ENCODE measurements at regions of chr11 and their contacts with region 1.

Region 1: DNA sequence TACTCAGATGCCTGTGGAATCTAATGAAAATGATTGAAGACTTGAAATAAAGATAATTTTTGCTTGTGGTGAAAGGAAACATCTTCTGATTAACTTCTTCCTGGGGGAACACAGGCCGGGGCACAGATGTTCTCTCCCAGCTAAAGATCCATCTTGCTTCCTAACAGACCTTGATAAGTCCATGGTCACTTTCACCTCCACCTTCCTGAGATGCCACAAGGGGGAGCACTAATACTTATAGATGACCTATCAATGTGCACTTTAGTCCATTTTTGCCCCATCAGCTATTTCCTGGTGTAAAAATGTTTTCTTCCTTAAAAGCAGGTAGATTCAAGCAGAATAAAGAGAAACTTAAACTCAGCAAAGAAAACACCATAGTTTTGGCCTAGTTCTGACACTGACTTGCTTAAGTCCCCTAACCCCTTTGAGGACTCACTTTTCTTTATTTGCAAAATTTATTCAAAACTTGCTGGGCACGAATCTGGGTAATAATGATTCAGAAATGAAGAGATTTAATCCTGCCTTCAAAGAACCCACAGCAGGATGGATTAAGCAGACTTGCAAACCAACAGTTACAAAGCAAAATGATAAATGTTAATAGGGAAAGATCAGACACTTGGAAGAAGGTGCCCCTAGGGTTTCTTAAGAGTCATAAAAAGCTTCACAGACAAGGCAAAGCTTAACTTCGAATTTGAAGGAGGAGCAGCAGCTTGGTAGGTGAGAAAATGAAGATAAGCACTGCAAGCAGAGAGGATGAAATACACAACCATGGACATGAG is 158.7 kb downstream of the RAB38 start:
- DNase-seq: peak; percentile 29
- H3K4me3 Mint-ChIP-seq: no peak overlapping the region
- H3K27ac Mint-ChIP-seq: no peak overlapping the region
- H3K4me1 Mint-ChIP-seq: no peaks in the 10 kb centered on the region
- H3K27me3 Mint-ChIP-seq: no peaks in the 10 kb centered on the region

Region 2: DNA sequence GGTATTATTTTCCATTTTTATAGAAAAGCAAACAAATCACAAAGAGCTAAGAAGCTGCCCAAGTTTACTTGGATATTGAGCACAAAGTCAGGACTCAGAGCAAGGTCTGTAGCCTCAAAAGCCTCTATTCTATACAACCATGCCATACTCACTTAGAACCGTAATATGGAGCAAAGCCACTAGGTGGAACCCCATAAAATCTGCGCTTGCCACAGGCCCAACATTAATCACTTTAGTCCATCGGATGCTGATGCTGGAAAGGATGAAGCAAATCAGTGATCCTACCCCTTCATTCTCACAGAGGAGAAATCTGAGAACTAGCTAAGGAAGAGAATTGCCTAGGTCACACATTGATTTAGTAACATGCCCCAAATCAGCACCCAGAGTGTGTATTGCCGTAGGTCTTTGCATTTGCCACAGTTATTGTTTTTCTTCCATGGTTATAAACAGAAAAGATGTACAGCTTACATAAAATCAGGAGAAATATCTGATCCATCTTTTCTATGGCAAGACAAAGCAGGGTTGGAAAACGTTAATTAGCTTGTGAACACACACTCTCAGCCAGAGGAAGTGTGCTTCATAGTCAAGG is 215.4 kb after region 1 on chr11:
- intact Hi-C with region 1: loop called (anchors 1 kb)
- DNase-seq: peak; percentile 1
- H3K4me3 Mint-ChIP-seq: no peak overlapping the region
- H3K27ac Mint-ChIP-seq: no peak overlapping the region
- H3K4me1 Mint-ChIP-seq: no peaks in the 10 kb centered on the region
- H3K27me3 Mint-ChIP-seq: peaks cover 2% of the 10 kb centered on the region

Region 3: GRCh38 chr11:88307749-88308425 is 291.3 kb after region 1 on chr11:
- intact Hi-C with region 1: no loop called
- DNase-seq: no peak
- H3K4me3 Mint-ChIP-seq: no peak overlapping the region
- H3K27ac Mint-ChIP-seq: no peak overlapping the region
- H3K4me1 Mint-ChIP-seq: peaks cover 51% of the 10 kb centered on the region
- H3K27me3 Mint-ChIP-seq: no peaks in the 10 kb centered on the region

Region 4: GRCh38 chr11:88552377-88553062 is 535.9 kb after region 1 on chr11:
- intact Hi-C with region 1: loop called (anchors 1 kb)
- DNase-seq: peak; percentile 37
- H3K4me3 Mint-ChIP-seq: no peak overlapping the region
- H3K27ac Mint-ChIP-seq: no peak overlapping the region
- H3K4me1 Mint-ChIP-seq: peaks cover 5% of the 10 kb centered on the region
- H3K27me3 Mint-ChIP-seq: peaks cover 8% of the 10 kb centered on the region